Prostate gland (tissue), 2 donors: ENCODE measurements at regions of chr4 and their contacts with region 1.

Region 1: DNA sequence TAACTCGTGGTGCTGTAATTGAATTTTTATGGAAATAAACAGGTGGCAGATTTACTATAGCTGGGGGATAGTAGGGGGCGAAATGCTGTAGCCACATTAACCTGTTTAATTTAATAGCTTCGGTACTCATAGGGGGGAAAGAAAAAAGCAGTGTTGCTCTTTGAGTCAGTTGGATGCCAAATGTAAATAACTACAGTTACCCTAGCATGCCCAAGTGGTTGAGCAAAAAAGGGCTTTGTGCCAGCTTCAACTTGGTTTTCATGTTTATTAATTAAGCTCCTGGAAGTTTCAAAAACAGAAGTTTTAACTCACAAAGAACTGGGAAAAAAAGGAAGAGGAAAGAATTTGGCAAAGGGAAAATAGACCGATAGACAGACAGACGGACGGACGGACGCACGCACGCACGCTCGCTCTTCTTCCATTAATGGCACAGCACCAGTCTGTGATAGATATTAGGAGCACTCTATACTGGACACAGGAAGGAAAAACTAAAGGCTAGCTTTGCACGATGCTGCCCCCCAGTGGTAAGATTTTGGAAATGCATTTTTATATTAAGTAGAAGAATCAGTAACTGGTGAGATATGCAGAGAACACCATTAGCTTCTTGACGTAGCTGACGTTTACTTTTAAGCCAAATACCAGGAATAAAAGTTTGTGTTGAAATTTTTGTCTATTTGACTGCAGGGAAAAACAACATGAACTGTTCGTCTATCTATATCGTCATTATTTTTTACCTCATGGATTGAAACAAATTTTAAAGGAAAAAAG is 151.8 kb downstream of the SLC7A11 start:
- DNase-seq: peak; percentile 72
- H3K4me3 ChIP-seq: no peak overlapping the region
- H3K27ac ChIP-seq: no peak overlapping the region
- H3K4me1 ChIP-seq: no peaks in the 10 kb centered on the region
- H3K27me3 ChIP-seq: no peaks in the 10 kb centered on the region
- CTCF ChIP-seq: peak; percentile 73 to 91 (median 80)
- POLR2A ChIP-seq: no peak

Region 2: GRCh38 chr4:137124278-137124932 is 965.9 kb before region 1 on chr4:
- intact Hi-C with region 1: loop called (anchors 5 kb)
- DNase-seq: no peak
- H3K4me3 ChIP-seq: peak overlapping the region in 1 of 2 donors; percentile 10
- H3K27ac ChIP-seq: no peak overlapping the region
- H3K4me1 ChIP-seq: no peaks in the 10 kb centered on the region
- H3K27me3 ChIP-seq: no peaks in the 10 kb centered on the region
- CTCF ChIP-seq: peak in 3 of 4 experiments; percentile 40 to 54 (median 53)
- POLR2A ChIP-seq: no peak

Region 3: GRCh38 chr4:137283737-137284136 is 806.6 kb before region 1 on chr4:
- intact Hi-C with region 1: loop called (anchors 10 kb)
- DNase-seq: no peak
- H3K4me3 ChIP-seq: no peak overlapping the region
- H3K27ac ChIP-seq: no peak overlapping the region
- H3K4me1 ChIP-seq: no peaks in the 10 kb centered on the region
- H3K27me3 ChIP-seq: no peaks in the 10 kb centered on the region
- CTCF ChIP-seq: peak in 2 of 4 experiments; percentile 17 to 25
- POLR2A ChIP-seq: no peak

Region 4: DNA sequence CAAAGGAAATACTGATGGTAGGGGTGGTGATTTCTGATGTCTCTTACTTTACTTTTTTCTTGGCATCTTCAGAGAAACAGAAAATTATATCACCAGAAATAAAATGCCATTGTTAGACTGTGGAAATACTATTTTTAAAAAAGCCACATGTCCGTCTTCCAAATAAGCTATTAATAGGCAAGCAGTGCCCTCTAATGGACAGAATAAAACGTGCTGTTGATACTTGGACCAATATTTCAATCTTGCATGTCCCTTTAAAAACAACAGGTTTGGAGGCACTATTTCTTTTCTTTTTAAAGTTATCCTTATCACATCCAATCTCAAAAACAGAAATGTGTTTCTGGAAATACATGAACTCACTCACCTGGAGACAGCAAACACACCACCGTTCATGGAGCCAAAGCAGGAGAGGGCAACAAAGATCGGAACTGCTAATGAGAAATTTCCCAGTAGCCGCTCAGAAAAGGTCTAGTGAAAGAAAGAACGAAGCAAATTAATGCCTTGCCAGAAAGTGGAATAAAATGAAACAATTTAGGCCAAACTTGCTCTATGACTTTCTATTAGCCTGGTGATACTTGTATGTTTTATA is 92.6 kb after region 1 on chr4:
- intact Hi-C with region 1: loop called (anchors 10 kb)
- DNase-seq: peak; percentile 24
- H3K4me3 ChIP-seq: no peak overlapping the region
- H3K27ac ChIP-seq: no peak overlapping the region
- H3K4me1 ChIP-seq: no peaks in the 10 kb centered on the region
- H3K27me3 ChIP-seq: no peaks in the 10 kb centered on the region
- CTCF ChIP-seq: peak in 3 of 4 experiments; percentile 53 to 71 (median 68)
- POLR2A ChIP-seq: no peak

Region 5: DNA sequence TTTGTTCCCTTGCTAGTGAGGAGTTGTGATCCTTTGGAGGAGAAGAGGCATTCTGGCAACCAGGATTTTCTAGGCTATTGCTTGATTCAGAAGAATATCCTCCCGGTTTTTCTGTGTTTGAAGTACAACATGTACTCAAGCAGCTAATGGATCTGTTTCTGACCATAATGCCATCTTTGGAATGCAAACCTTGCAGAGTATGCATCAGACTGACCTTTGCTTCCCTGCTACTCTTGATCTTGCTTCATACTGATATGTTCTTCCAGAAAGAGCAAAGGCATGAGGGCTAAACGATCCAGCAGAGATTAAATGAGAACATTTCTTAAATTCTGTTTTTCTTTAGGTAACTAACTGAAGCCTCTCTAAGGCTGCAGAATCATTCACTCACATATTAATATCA is 417.2 kb after region 1 on chr4:
- intact Hi-C with region 1: no loop called
- DNase-seq: no peak
- H3K4me3 ChIP-seq: no peak overlapping the region
- H3K27ac ChIP-seq: no peak overlapping the region
- H3K4me1 ChIP-seq: no peaks in the 10 kb centered on the region
- H3K27me3 ChIP-seq: no peaks in the 10 kb centered on the region
- CTCF ChIP-seq: no peak
- POLR2A ChIP-seq: no peak

Region 6: GRCh38 chr4:138680989-138681604 is 590.8 kb after region 1 on chr4:
- intact Hi-C with region 1: loop called (anchors 5 kb)
- DNase-seq: peak; percentile 73
- H3K4me3 ChIP-seq: no peak overlapping the region
- H3K27ac ChIP-seq: no peak overlapping the region
- H3K4me1 ChIP-seq: no peaks in the 10 kb centered on the region
- H3K27me3 ChIP-seq: no peaks in the 10 kb centered on the region
- CTCF ChIP-seq: peak; percentile 83 to 99 (median 91)
- POLR2A ChIP-seq: no peak